Psoas muscle (tissue), 8 donors: ENCODE measurements at regions of chr16 and their contacts with region 1.

Region 1: DNA sequence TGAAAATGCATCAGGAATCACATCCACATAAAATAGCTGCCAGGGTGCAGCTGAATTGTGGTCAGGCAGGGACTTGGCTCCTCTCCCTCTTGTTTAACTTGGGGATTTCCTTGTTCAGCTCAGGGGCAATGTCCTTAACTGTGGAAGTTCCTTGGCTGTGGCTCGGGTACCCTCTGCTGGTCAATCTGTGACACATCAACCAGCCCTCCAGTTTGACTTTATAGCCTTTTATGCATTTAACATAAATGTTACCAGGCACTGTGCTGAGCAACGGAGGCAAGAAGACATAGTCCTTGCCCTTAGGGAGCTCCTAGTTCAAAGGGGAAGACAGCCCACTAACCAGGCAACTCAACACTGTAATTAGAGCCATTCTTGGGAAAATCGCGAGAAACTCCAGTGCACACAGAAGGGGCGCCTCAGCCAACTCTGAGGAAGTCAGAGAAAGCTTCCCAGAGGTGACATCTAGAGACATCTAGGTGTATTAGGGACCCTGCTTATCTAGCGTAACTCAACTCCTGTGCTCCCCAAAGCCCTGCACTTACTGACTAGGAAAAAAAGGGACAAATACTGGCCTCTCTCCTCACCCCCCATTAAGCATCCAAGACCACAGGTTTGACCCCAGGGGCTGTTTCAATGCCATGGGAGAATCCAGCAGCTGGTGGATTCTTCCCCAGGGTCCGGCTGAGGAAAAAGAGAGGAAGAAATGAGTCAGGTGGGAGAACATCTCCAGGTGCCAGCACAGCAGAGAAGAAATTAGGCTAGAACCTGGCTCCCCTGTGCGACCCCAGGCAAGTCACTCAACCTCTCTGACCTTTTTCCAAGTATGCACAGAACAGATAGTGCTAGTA is 17.3 kb upstream of the EEF2K start:
- DNase-seq: peak; percentile 51 to 74
- ATAC-seq: no peak
- H3K4me3 ChIP-seq: no peak overlapping the region
- H3K27ac ChIP-seq: peak overlapping the region; percentile 90
- H3K4me1 ChIP-seq: peaks cover 24% of the 10 kb centered on the region
- H3K27me3 ChIP-seq: no peaks in the 10 kb centered on the region
- CTCF ChIP-seq: peak; percentile 81

Region 2: GRCh38 chr16:21952793-21953540 is 235.9 kb before region 1 on chr16 and contains the start of gene UQCRC2:
- intact Hi-C with region 1: loop called (anchors 5 to 10 kb)
- DNase-seq: peak; percentile 87 to 92
- ATAC-seq: peak; percentile 95 to 98 (median 96)
- H3K4me3 ChIP-seq: peak within 1 kb of the TSS; percentile 97
- H3K27ac ChIP-seq: peak within 1 kb of the TSS; percentile 97
- H3K4me1 ChIP-seq: peaks cover 42% of the 10 kb centered on the region
- H3K27me3 ChIP-seq: no peaks in the 10 kb centered on the region
- CTCF ChIP-seq: no peak
- total RNA-seq, gene UQCRC2: 434 to 716 (median 591) TPM

Region 3: DNA sequence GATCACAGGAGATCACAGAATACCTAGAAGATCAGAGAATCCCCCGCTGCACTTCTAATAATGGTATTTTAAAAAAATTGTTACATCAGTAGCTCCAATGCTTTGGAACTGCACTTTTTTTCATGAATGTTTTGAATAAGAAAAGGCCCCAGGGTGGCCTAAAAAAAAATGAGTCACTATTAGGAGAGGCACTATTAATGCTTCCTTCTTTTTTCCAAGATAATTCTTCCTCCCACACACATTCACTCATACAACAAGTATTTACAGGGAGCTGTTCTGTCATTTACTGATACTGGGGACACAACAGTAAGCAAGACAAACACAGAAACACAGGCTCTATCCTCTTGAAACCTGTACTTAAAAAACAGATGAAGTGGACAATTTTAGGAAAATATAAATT is 187.2 kb before region 1 on chr16:
- intact Hi-C with region 1: loop called (anchors 2 to 5 kb)
- DNase-seq: no peak
- ATAC-seq: no peak
- H3K4me3 ChIP-seq: no peak overlapping the region
- H3K27ac ChIP-seq: no peak overlapping the region
- H3K4me1 ChIP-seq: peaks cover 11% of the 10 kb centered on the region
- H3K27me3 ChIP-seq: no peaks in the 10 kb centered on the region
- CTCF ChIP-seq: no peak

Region 4: GRCh38 chr16:22089910-22090309 is 98.9 kb before region 1 on chr16:
- intact Hi-C with region 1: loop called in 1 of 2 experiments (anchors 5 kb)
- DNase-seq: no peak
- ATAC-seq: no peak
- H3K4me3 ChIP-seq: no peak overlapping the region
- H3K27ac ChIP-seq: no peak overlapping the region
- H3K4me1 ChIP-seq: no peaks in the 10 kb centered on the region
- H3K27me3 ChIP-seq: no peaks in the 10 kb centered on the region
- CTCF ChIP-seq: no peak